K562 (cell line): ENCODE measurements at regions of chrX and their contacts with region 1.

Region 1: GRCh38 chrX:132226169-132226568 is 6.9 kb upstream of the RAP2C start:
- DNase-seq: peak in 1 of 4 experiments; percentile 12
- ATAC-seq: no peak
- H3K4me3 ChIP-seq: no peak overlapping the region
- H3K27ac ChIP-seq: no peak overlapping the region
- H3K4me1 ChIP-seq: 0 out of 5 replicates have a peak, but pooled peaks cover 0 to under 1% of the 10 kb centered on the region in 2 experiments
- H3K27me3 ChIP-seq: no peaks in the 10 kb centered on the region
- CTCF ChIP-seq: peak; percentile 17 to 61 (median 18); a peak in 3 of 6 replicates
- EP300 ChIP-seq: no peak
- POLR2A ChIP-seq: no peak
- RAD21 ChIP-seq: peak; percentile 43 to 59; a peak in 3 of 4 replicates

Region 2: GRCh38 chrX:132292793-132293192 is 66.6 kb after region 1 on chrX:
- CTCF ChIA-PET with region 1: no interaction called
- POLR2A ChIA-PET with region 1: no interaction called
- in situ Hi-C with region 1: no loop called
- intact Hi-C with region 1: loop called (anchors 5 kb)
- DNase-seq: peak; percentile 33 to 48 (median 38)
- ATAC-seq: peak; percentile 79
- H3K4me3 ChIP-seq: no peak overlapping the region
- H3K27ac ChIP-seq: no peak overlapping the region
- H3K4me1 ChIP-seq: no peaks in the 10 kb centered on the region
- H3K27me3 ChIP-seq: no peaks in the 10 kb centered on the region
- CTCF ChIP-seq: peak; percentile 51 to 61 (median 52)
- EP300 ChIP-seq: no peak
- POLR2A ChIP-seq: no peak
- RAD21 ChIP-seq: peak; percentile 48 to 65; a peak in 3 of 4 replicates

Region 3: GRCh38 chrX:132505116-132505515 is 278.9 kb after region 1 on chrX:
- CTCF ChIA-PET with region 1: no interaction called
- POLR2A ChIA-PET with region 1: no interaction called
- in situ Hi-C with region 1: no loop called
- intact Hi-C with region 1: no loop called
- DNase-seq: no peak
- ATAC-seq: no peak
- H3K4me3 ChIP-seq: no peak overlapping the region
- H3K27ac ChIP-seq: no peak overlapping the region
- H3K4me1 ChIP-seq: no peaks in the 10 kb centered on the region
- H3K27me3 ChIP-seq: no peaks in the 10 kb centered on the region
- CTCF ChIP-seq: no peak
- EP300 ChIP-seq: no peak
- POLR2A ChIP-seq: no peak
- RAD21 ChIP-seq: no peak

Region 4: GRCh38 chrX:132592880-132593279 is 366.7 kb after region 1 on chrX:
- CTCF ChIA-PET with region 1: no interaction called
- POLR2A ChIA-PET with region 1: no interaction called
- in situ Hi-C with region 1: loop called (anchors 10 kb)
- intact Hi-C with region 1: no loop called
- DNase-seq: no peak
- ATAC-seq: peak; percentile 40; the same call in 1 of the 3 replicates
- H3K4me3 ChIP-seq: no peak overlapping the region
- H3K27ac ChIP-seq: no peak overlapping the region
- H3K4me1 ChIP-seq: no peaks in the 10 kb centered on the region
- H3K27me3 ChIP-seq: no peaks in the 10 kb centered on the region
- CTCF ChIP-seq: peak in 2 of 3 experiments; percentile 25 to 26; a peak in 1 of 6 replicates
- EP300 ChIP-seq: no peak
- POLR2A ChIP-seq: no peak
- RAD21 ChIP-seq: peak in 1 of 2 experiments; percentile 38; a peak in 2 of 4 replicates

Region 5: GRCh38 chrX:132615391-132616131 is 389.4 kb after region 1 on chrX:
- CTCF ChIA-PET with region 1: interaction called, 7 read pairs
- POLR2A ChIA-PET with region 1: no interaction called
- in situ Hi-C with region 1: no loop called
- intact Hi-C with region 1: loop called (anchors 2 kb)
- DNase-seq: peak; percentile 23 to 52 (median 33)
- ATAC-seq: peak; percentile 89
- H3K4me3 ChIP-seq: no peak overlapping the region
- H3K27ac ChIP-seq: no peak overlapping the region
- H3K4me1 ChIP-seq: no peaks in the 10 kb centered on the region
- H3K27me3 ChIP-seq: no peaks in the 10 kb centered on the region
- CTCF ChIP-seq: peak; percentile 48 to 66 (median 55)
- EP300 ChIP-seq: no peak
- POLR2A ChIP-seq: no peak
- RAD21 ChIP-seq: peak; percentile 28 to 38

Region 6: DNA sequence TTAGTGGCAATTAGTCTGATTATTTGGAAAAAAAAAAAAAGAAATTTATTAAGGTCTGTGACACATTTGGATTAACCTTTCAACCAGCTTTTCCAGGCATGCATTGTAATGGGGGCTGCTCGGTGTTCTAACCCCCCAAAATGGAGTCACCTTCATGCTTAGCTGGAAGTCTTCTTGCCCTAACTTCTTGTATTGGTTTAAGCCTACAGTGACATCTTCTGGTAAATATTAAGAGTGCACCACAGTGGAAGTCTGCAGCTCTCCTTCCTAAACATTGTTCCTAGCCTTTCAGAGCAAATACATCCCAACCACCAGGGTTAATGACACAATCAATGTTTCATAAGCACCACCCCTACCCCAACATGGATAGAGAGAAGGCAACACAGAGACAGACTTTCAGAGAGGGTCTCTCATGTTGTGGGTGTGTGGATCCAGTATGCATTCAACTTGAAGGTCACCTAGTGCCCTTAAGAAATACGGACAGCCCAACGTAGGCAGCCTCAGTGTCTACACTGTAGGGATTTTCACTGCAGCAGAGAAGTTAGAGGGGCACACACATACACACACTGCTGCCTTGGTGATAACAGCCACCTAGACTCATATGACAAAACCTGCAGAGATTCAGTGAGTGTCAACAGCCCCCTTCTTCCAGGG is 405.5 kb after region 1 on chrX:
- CTCF ChIA-PET with region 1: interaction called, 8 read pairs
- POLR2A ChIA-PET with region 1: no interaction called
- in situ Hi-C with region 1: no loop called
- intact Hi-C with region 1: loop called (anchors 5 kb)
- DNase-seq: peak; percentile 6 to 28 (median 11)
- ATAC-seq: peak; percentile 66; the same call in 2 of the 3 replicates
- H3K4me3 ChIP-seq: no peak overlapping the region
- H3K27ac ChIP-seq: no peak overlapping the region
- H3K4me1 ChIP-seq: no peaks in the 10 kb centered on the region
- H3K27me3 ChIP-seq: peaks cover 3 to 12% of the 10 kb centered on the region in 2 experiments; a peak in 3 of 5 replicates
- CTCF ChIP-seq: peak; percentile 27 to 62 (median 42); a peak in 5 of 6 replicates
- EP300 ChIP-seq: no peak
- POLR2A ChIP-seq: no peak
- RAD21 ChIP-seq: peak; percentile 61 to 64